Activated naive CD8-positive, alpha-beta T cell treated with anti-CD3 and anti-CD28 coated beads, Interleukin-2, amount 10 ng/mL, durations not matched to agents 7 days and 5 days (primary cell): ENCODE measurements at regions of chr2 and their contacts with region 1.

Region 1: GRCh38 chr2:64653349-64654062 is at the start of gene SERTAD2:
- DNase-seq: peak; percentile 88
- ATAC-seq: peak; percentile 87
- H3K4me3 Mint-ChIP-seq: peak within 1 kb of the TSS; percentile 90
- H3K27ac Mint-ChIP-seq: peak within 1 kb of the TSS; percentile 90
- H3K4me1 Mint-ChIP-seq: peaks cover 57% of the 10 kb centered on the region
- H3K27me3 Mint-ChIP-seq: no peaks in the 10 kb centered on the region
- total RNA-seq, gene SERTAD2: 27.0 to 27.7 TPM

Region 2: GRCh38 chr2:64586883-64587481 is 66.5 kb before region 1 on chr2:
- POLR2A ChIA-PET with region 1: no interaction called
- DNase-seq: no peak
- ATAC-seq: no peak
- H3K4me3 Mint-ChIP-seq: no peak overlapping the region
- H3K27ac Mint-ChIP-seq: no peak overlapping the region
- H3K4me1 Mint-ChIP-seq: peaks cover 3% of the 10 kb centered on the region
- H3K27me3 Mint-ChIP-seq: no peaks in the 10 kb centered on the region

Region 3: DNA sequence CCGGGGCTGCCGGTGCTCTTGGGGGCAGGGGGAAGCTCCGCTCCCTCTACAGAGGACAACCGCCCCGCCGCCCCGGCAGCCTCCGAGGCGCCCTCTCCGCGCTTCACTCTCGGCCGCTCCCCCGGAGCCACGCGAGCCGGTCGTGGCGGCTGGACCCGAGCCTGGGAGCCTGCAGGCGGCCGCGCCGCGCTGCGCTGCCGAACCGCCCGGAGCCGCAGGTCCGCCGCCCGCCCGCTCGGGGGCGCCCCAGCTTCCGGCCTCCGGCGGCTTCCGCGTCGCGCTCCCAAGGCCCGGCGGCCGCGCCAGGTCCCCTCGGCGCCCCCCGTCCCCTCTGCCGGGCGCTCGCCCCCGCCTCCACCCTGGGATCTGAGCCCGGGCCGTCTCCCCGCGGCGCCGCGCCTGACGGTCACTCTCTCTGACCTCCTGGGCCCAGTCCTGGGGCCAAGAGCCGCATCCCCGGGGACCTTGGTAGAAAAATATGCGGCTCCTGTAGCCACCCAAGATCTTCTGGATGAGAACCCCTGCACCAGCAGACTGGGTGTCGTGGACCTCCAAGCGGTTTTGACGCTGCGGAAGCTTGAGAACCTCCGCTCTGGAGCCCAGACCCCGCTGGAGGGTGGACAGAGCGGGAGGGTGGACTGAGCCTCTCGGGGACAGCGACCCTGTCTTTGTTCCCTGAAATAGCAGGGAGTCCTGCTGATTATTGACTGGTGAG is 44.1 kb before region 1 on chr2:
- POLR2A ChIA-PET with region 1: interaction called, 29 read pairs
- DNase-seq: peak; percentile 93
- ATAC-seq: peak; percentile 80
- H3K4me3 Mint-ChIP-seq: peak overlapping the region; percentile 74
- H3K27ac Mint-ChIP-seq: peak overlapping the region; percentile 79
- H3K4me1 Mint-ChIP-seq: peaks cover 20% of the 10 kb centered on the region
- H3K27me3 Mint-ChIP-seq: peaks cover 19% of the 10 kb centered on the region

Region 4: GRCh38 chr2:64666810-64667438 is 13.4 kb after region 1 on chr2:
- POLR2A ChIA-PET with region 1: interaction called, 70 read pairs
- DNase-seq: no peak
- ATAC-seq: peak; percentile 77
- H3K4me3 Mint-ChIP-seq: peak overlapping the region; percentile 46
- H3K27ac Mint-ChIP-seq: peak overlapping the region; percentile 78
- H3K4me1 Mint-ChIP-seq: peaks cover 25% of the 10 kb centered on the region
- H3K27me3 Mint-ChIP-seq: no peaks in the 10 kb centered on the region

Region 5: DNA sequence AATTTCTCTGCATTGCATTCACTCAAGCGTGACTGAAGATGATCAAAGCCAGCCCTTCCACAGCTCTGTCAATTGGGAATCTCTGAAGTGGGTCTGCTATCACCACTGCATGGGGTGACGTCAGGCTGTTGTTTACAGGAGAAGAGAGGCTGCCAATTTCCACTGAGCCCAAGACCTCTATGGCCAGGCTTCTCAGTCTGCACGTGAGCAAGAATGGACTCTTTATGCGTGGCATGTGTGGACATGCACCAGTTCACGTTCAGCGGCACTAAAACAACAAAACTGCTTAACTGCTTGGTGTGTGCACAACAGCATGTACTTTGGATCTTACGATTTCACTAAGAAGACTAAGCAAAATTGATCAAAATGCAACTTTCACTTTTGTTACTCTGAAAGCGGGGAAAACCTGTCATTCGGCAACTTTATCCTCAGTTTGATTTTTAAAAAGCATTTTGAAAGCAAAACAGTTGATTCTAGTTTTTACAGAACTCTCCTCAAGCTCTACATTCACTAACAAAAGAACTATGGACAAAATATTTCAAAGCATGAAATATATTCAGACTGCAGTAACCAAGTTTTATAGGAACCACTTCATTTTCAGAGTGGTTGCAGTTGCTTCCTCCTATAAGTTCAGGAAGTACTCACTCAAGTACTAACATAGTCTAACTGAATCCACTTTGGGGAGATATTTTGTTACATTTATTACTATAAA is 77.2 kb after region 1 on chr2:
- POLR2A ChIA-PET with region 1: interaction called, 86 read pairs
- DNase-seq: peak; percentile 45
- ATAC-seq: peak; percentile 63
- H3K4me3 Mint-ChIP-seq: peak overlapping the region; percentile 86
- H3K27ac Mint-ChIP-seq: peak overlapping the region; percentile 95
- H3K4me1 Mint-ChIP-seq: peaks cover 56% of the 10 kb centered on the region
- H3K27me3 Mint-ChIP-seq: no peaks in the 10 kb centered on the region

Region 6: GRCh38 chr2:64745562-64745961 is 92.1 kb after region 1 on chr2:
- POLR2A ChIA-PET with region 1: interaction called, 137 read pairs
- DNase-seq: no peak
- ATAC-seq: no peak
- H3K4me3 Mint-ChIP-seq: no peak overlapping the region
- H3K27ac Mint-ChIP-seq: no peak overlapping the region
- H3K4me1 Mint-ChIP-seq: peaks cover 14% of the 10 kb centered on the region
- H3K27me3 Mint-ChIP-seq: no peaks in the 10 kb centered on the region